Activated CD4-positive, alpha-beta memory T cell treated with anti-CD3 and anti-CD28 coated beads, Interleukin-2, amount 10 ng/mL, durations not matched to agents 7 days and 5 days (primary cell): ENCODE measurements at regions of chr11 and their contacts with region 1.

Region 1: DNA sequence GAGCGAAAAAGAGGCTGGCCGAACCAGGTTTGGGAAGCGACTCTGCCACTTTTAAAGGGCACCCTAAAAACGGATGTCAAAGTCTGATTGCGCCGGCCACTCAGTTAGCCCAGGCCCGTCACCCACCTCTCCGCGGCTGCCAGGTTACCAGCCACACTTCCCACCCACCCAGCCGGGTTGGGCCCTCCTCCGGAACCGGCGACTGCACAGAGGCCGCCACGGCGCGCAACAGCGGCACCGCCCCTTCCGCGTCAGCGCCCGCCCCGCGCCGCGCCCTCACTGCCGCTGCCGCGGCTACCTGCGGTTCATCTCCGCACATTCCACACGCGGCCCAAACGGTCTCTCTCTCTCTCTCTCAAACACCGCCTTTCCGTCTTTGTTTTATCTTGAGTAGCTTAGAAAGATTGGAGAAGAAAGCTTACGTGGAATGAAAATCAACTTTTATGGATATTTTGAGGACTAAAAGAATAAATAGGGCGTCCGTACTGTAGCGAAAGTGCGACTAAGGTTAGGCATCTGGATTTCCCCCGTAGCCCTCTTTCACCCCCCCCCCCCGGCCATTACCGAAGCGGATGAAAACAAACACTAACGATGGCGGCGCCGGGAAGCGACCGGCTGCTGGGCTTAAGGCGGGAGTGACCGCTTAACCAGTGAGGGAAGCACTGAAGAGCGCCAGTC is at the starts of genes ATG13 and HARBI1:
- DNase-seq: peak; percentile 93
- H3K4me3 Mint-ChIP-seq: peak within 1 kb of the TSS; percentile 90
- H3K27ac Mint-ChIP-seq: peak within 1 kb of the TSS; percentile 96
- H3K4me1 Mint-ChIP-seq: peaks cover 48% of the 10 kb centered on the region
- H3K27me3 Mint-ChIP-seq: no peaks in the 10 kb centered on the region
- total RNA-seq, gene ATG13: 70.4 to 72.1 TPM
- total RNA-seq, gene HARBI1: 5.6 to 7.3 TPM

Region 2: GRCh38 chr11:46489661-46490560 is 127.2 kb before region 1 on chr11:
- CTCF ChIA-PET with region 1: interaction called, 19 read pairs
- POLR2A ChIA-PET with region 1: no interaction called
- DNase-seq: peak; percentile 36
- H3K4me3 Mint-ChIP-seq: no peak overlapping the region
- H3K27ac Mint-ChIP-seq: no peak overlapping the region
- H3K4me1 Mint-ChIP-seq: peaks cover 3% of the 10 kb centered on the region
- H3K27me3 Mint-ChIP-seq: no peaks in the 10 kb centered on the region

Region 3: GRCh38 chr11:46560300-46560991 is 56.7 kb before region 1 on chr11:
- CTCF ChIA-PET with region 1: interaction called, 24 read pairs
- POLR2A ChIA-PET with region 1: interaction called, 18 read pairs
- DNase-seq: peak; percentile 27
- H3K4me3 Mint-ChIP-seq: peak overlapping the region; percentile 95
- H3K27ac Mint-ChIP-seq: peak overlapping the region; percentile 96
- H3K4me1 Mint-ChIP-seq: peaks cover 56% of the 10 kb centered on the region
- H3K27me3 Mint-ChIP-seq: no peaks in the 10 kb centered on the region

Region 4: GRCh38 chr11:46570790-46571398 is 46.2 kb before region 1 on chr11:
- CTCF ChIA-PET with region 1: no interaction called
- POLR2A ChIA-PET with region 1: interaction called, 11 read pairs
- DNase-seq: no peak
- H3K4me3 Mint-ChIP-seq: no peak overlapping the region
- H3K27ac Mint-ChIP-seq: no peak overlapping the region
- H3K4me1 Mint-ChIP-seq: peaks cover 21% of the 10 kb centered on the region
- H3K27me3 Mint-ChIP-seq: no peaks in the 10 kb centered on the region

Region 5: DNA sequence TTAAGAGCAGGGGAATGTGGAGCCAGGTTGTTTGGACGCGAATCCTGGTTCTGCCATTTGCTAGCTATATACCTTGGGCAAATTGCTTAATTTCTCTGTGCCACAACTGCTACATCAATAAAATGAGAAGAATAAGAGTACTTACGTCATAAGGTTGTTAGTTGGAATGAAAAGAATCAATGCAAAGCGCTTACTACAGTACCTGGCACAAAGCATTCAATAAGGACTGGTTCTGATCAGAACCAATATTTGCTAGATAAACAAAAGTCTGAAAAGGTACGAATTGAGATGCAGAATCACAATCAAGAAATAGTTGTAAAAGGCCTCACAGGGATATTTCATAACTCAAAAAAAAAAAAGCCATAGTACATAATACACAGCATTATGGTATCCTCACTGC is 34.5 kb before region 1 on chr11:
- CTCF ChIA-PET with region 1: no interaction called
- POLR2A ChIA-PET with region 1: no interaction called
- DNase-seq: no peak
- H3K4me3 Mint-ChIP-seq: no peak overlapping the region
- H3K27ac Mint-ChIP-seq: no peak overlapping the region
- H3K4me1 Mint-ChIP-seq: peaks cover 7% of the 10 kb centered on the region
- H3K27me3 Mint-ChIP-seq: no peaks in the 10 kb centered on the region

Region 6: GRCh38 chr11:46675288-46675851 is 58.2 kb after region 1 on chr11:
- CTCF ChIA-PET with region 1: interaction called, 8 read pairs
- POLR2A ChIA-PET with region 1: interaction called, 41 read pairs
- DNase-seq: no peak
- H3K4me3 Mint-ChIP-seq: no peak overlapping the region
- H3K27ac Mint-ChIP-seq: peak overlapping the region; percentile 83
- H3K4me1 Mint-ChIP-seq: peaks cover 54% of the 10 kb centered on the region
- H3K27me3 Mint-ChIP-seq: no peaks in the 10 kb centered on the region

Region 7: GRCh38 chr11:46700241-46701077 is 83.3 kb after region 1 on chr11 and contains the starts of genes ARHGAP1 and ZNF408:
- CTCF ChIA-PET with region 1: interaction called, 14 read pairs
- POLR2A ChIA-PET with region 1: interaction called, 34 read pairs
- DNase-seq: peak; percentile 100
- H3K4me3 Mint-ChIP-seq: peak within 1 kb of the TSS; percentile 98
- H3K27ac Mint-ChIP-seq: peak within 1 kb of the TSS; percentile 96
- H3K4me1 Mint-ChIP-seq: peaks cover 51% of the 10 kb centered on the region
- H3K27me3 Mint-ChIP-seq: no peaks in the 10 kb centered on the region
- total RNA-seq, gene ARHGAP1: 77.8 to 79.7 TPM
- total RNA-seq, gene ZNF408: 17.1 to 17.5 TPM